Psoas muscle (tissue), 8 donors: ENCODE measurements at regions of chr9 and their contacts with region 1.

Region 1: GRCh38 chr9:117777823-117778222 is 73.6 kb downstream of the TLR4 start:
- DNase-seq: no peak
- ATAC-seq: peak in 1 of 4 donors; percentile 58
- H3K4me3 ChIP-seq: no peak overlapping the region
- H3K27ac ChIP-seq: no peak overlapping the region
- H3K4me1 ChIP-seq: no peaks in the 10 kb centered on the region
- H3K27me3 ChIP-seq: no peaks in the 10 kb centered on the region
- CTCF ChIP-seq: no peak

Region 2: DNA sequence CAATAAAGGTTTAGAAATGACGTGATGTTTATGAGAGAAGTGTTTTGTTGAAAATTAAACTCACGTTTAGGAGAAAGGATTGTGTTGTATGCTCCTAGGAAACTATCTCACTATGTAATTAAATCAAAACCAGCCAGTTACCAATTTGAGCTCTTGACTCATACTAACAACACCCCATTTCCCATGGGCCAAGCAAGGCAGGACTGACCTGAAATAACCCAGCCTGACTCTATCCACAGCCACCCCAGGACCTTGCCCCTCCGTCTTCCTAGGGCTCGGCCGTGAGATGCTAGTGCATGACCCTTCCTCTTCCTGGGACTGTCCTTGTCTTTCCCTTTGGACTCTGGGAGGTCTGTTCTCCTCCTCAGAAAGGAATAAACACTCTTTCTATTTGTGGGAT is 57.3 kb before region 1 on chr9:
- intact Hi-C with region 1: loop called in 1 of 2 experiments (anchors 5 kb)
- DNase-seq: peak; percentile 44 to 81
- ATAC-seq: peak in 3 of 4 donors; percentile 78 to 86 (median 83)
- H3K4me3 ChIP-seq: no peak overlapping the region
- H3K27ac ChIP-seq: peak overlapping the region; percentile 7
- H3K4me1 ChIP-seq: peaks cover 3% of the 10 kb centered on the region
- H3K27me3 ChIP-seq: no peaks in the 10 kb centered on the region
- CTCF ChIP-seq: no peak